Activated CD8-positive, alpha-beta T cell treated with anti-CD3 and anti-CD28 coated beads for 36 hours (primary cell): ENCODE measurements at regions of chr19 and their contacts with region 1.

Region 1: GRCh38 chr19:43519436-43520088 is 7.4 kb downstream of the ETHE1 start:
- DNase-seq: peak; percentile 85
- ATAC-seq: peak; percentile 91
- H3K4me3 Mint-ChIP-seq: no peak overlapping the region
- H3K27ac Mint-ChIP-seq: no peak overlapping the region
- H3K4me1 Mint-ChIP-seq: peaks cover 17% of the 10 kb centered on the region
- H3K27me3 Mint-ChIP-seq: no peaks in the 10 kb centered on the region
- CTCF ChIP-seq: peak; percentile 95

Region 2: DNA sequence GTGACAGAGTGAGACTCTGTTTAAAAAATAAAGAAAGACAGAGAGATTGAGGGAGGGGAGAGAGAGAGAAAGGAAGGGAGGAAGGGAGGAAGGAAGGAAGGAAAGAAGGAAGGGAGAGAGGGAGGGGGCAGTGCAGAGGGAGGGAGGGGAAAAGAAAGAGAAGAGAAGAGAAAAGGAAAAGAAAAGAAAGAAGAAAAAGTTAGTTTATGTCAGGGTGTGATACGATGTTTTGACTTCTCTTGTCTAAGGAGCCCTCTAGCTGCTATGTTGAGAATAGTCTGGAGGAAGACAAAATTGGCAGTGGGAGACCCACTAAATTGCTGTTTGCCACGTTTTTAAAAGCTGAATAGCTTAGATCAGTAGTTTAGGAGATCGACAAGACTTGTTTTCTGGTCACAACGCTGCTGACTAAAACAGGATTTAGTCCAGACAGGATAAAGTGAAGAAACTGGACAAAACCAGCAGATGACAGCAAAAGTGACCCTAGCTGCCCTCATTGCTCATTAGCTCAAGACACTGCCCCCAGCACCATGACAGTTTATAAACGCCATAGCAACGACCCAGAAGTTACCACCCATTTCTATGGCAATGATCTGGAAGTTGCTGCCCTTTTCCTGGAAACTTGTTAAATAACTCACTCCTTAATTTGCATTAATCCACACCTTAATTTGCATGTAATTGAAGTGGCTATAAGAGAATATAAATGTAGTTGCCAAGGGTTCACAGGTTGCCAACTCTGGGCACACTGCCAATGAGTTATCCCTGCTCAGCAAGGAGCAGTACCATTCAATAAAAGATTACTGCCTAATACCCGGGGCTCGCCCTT is 93.8 kb before region 1 on chr19:
- CTCF ChIA-PET with region 1: interaction called, 78 read pairs
- POLR2A ChIA-PET with region 1: no interaction called
- intact Hi-C with region 1: no loop called
- DNase-seq: no peak
- ATAC-seq: no peak
- H3K4me3 Mint-ChIP-seq: no peak overlapping the region
- H3K27ac Mint-ChIP-seq: no peak overlapping the region
- H3K4me1 Mint-ChIP-seq: peaks cover 9% of the 10 kb centered on the region
- H3K27me3 Mint-ChIP-seq: no peaks in the 10 kb centered on the region
- CTCF ChIP-seq: peak; percentile 55

Region 3: GRCh38 chr19:43457809-43458208 is 61.8 kb before region 1 on chr19:
- CTCF ChIA-PET with region 1: interaction called, 14 read pairs
- POLR2A ChIA-PET with region 1: interaction called, 4 read pairs
- intact Hi-C with region 1: no loop called
- DNase-seq: no peak
- ATAC-seq: no peak
- H3K4me3 Mint-ChIP-seq: no peak overlapping the region
- H3K27ac Mint-ChIP-seq: no peak overlapping the region
- H3K4me1 Mint-ChIP-seq: peaks cover 20% of the 10 kb centered on the region
- H3K27me3 Mint-ChIP-seq: no peaks in the 10 kb centered on the region
- CTCF ChIP-seq: no peak

Region 4: GRCh38 chr19:43474986-43475705 is 44.4 kb before region 1 on chr19:
- CTCF ChIA-PET with region 1: interaction called, 13 read pairs
- POLR2A ChIA-PET with region 1: interaction called, 3 read pairs
- intact Hi-C with region 1: no loop called
- DNase-seq: peak; percentile 95
- ATAC-seq: peak; percentile 93
- H3K4me3 Mint-ChIP-seq: peak overlapping the region; percentile 75
- H3K27ac Mint-ChIP-seq: peak overlapping the region; percentile 86
- H3K4me1 Mint-ChIP-seq: peaks cover 30% of the 10 kb centered on the region
- H3K27me3 Mint-ChIP-seq: no peaks in the 10 kb centered on the region
- CTCF ChIP-seq: no peak

Region 5: GRCh38 chr19:43532962-43533545 is 13.5 kb after region 1 on chr19 and contains the start of gene ZNF575:
- CTCF ChIA-PET with region 1: interaction called, 21 read pairs
- POLR2A ChIA-PET with region 1: no interaction called
- intact Hi-C with region 1: no loop called
- DNase-seq: peak; percentile 95
- ATAC-seq: peak; percentile 56
- H3K4me3 Mint-ChIP-seq: peak within 1 kb of the TSS; percentile 82
- H3K27ac Mint-ChIP-seq: peak within 1 kb of the TSS; percentile 94
- H3K4me1 Mint-ChIP-seq: peaks cover 16% of the 10 kb centered on the region
- H3K27me3 Mint-ChIP-seq: no peaks in the 10 kb centered on the region
- CTCF ChIP-seq: no peak
- total RNA-seq, gene ZNF575: 1.2 to 2.0 TPM